Heart left ventricle (tissue), 16 donors: ENCODE measurements at regions of chr5 and their contacts with region 1.

Region 1: DNA sequence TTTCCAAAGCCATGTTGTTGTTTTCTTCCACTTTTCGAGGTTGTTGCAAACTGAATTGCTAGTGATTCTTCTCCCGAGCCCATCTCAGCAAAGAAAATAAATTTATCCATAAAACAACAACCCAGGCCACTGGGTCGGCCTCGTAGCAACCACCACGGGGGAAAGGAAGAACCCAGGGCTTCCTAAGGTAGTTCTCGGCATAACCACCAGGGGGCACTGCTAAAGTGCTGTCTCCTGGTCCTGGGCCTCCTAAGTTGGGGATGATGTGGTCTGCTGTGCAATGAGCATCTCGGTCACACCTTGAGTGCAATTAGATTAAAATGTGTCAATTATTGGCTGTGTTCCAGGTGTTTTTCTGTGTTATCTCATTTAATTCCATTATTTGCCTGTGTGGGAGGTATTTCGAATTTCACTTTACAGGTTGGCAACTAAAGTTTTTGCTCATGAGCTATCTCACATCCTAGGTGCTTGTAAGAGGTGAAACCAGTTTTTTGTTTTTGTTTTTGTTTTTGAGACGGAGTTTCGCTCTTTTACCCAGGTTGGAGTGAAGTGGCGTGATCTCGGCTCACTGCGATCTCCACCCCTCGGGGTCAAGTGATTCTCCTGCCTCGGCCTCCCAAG is 102.8 kb upstream of the DAP start:
- DNase-seq: peak in 3 of 5 donors; percentile 24 to 44 (median 34)
- ATAC-seq: peak in 3 of 4 donors; percentile 56 to 74 (median 67)
- H3K4me3 ChIP-seq: no peak overlapping the region
- H3K27ac ChIP-seq: no peak overlapping the region
- H3K4me1 ChIP-seq: no peaks in the 10 kb centered on the region
- H3K27me3 ChIP-seq: peaks cover 0 to 1% (median 0%) of the 10 kb centered on the region in 9 donors
- CTCF ChIP-seq: peak; percentile 48 to 90 (median 72)
- POLR2A ChIP-seq: no peak

Region 2: DNA sequence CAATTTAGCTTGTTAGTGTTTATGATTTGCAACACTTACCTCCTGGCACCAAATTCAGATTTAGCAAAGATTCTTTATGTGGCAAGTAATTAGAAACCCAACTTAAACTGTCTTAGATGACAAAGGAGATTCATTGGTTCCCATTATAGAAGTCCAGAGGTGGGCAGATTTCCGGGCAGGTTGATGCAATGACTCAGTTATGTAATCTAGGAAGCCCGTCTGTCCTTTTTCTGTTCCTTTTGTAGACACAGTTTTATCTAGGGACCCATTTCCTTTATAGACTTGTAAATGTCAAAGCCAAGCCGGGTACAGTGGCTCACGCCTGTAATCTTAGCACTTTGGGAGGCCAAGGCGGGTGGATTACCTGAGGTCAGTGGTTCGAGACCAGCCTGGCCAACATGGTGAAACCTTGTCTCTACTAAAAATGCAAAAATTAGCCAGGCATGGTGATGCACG is 320.3 kb before region 1 on chr5:
- intact Hi-C with region 1: no loop called
- DNase-seq: no peak
- ATAC-seq: no peak
- H3K4me3 ChIP-seq: no peak overlapping the region
- H3K27ac ChIP-seq: no peak overlapping the region
- H3K4me1 ChIP-seq: peaks cover 0 to 14% (median 0%) of the 10 kb centered on the region in 12 donors
- H3K27me3 ChIP-seq: peaks cover 0 to 4% (median 0%) of the 10 kb centered on the region in 9 donors
- CTCF ChIP-seq: no peak
- POLR2A ChIP-seq: no peak

Region 3: GRCh38 chr5:10975945-10976344 is 112.1 kb after region 1 on chr5:
- intact Hi-C with region 1: no loop called
- DNase-seq: no peak
- ATAC-seq: no peak
- H3K4me3 ChIP-seq: no peak overlapping the region
- H3K27ac ChIP-seq: no peak overlapping the region
- H3K4me1 ChIP-seq: no peaks in the 10 kb centered on the region
- H3K27me3 ChIP-seq: no peaks in the 10 kb centered on the region
- CTCF ChIP-seq: no peak
- POLR2A ChIP-seq: no peak

Region 4: GRCh38 chr5:11182441-11183268 is 318.8 kb after region 1 on chr5:
- intact Hi-C with region 1: loop called in 4 of 10 experiments (anchors 5 to 10 kb)
- DNase-seq: no peak
- ATAC-seq: peak in 1 of 4 donors; percentile 34
- H3K4me3 ChIP-seq: no peak overlapping the region
- H3K27ac ChIP-seq: no peak overlapping the region
- H3K4me1 ChIP-seq: peaks cover 0 to 9% (median 0%) of the 10 kb centered on the region in 12 donors
- H3K27me3 ChIP-seq: no peaks in the 10 kb centered on the region
- CTCF ChIP-seq: peak in 10 of 12 donors; percentile 24 to 63 (median 40)
- POLR2A ChIP-seq: no peak